SK-N-SH (cell line): ENCODE measurements at regions of chr4 and their contacts with region 1.

Region 1: GRCh38 chr4:82721819-82722423 is 76.7 kb downstream of the SCD5 start:
- DNase-seq: peak; percentile 64
- H3K4me3 ChIP-seq: no peak overlapping the region
- H3K27ac ChIP-seq: no peak overlapping the region
- H3K4me1 ChIP-seq: 0 out of 4 replicates have a peak, but pooled peaks cover 0 to 4% of the 10 kb centered on the region in 2 experiments
- H3K27me3 ChIP-seq: no peaks in the 10 kb centered on the region
- CTCF ChIP-seq: peak; percentile 69
- EP300 ChIP-seq: no peak
- RAD21 ChIP-seq: peak; percentile 87

Region 2: DNA sequence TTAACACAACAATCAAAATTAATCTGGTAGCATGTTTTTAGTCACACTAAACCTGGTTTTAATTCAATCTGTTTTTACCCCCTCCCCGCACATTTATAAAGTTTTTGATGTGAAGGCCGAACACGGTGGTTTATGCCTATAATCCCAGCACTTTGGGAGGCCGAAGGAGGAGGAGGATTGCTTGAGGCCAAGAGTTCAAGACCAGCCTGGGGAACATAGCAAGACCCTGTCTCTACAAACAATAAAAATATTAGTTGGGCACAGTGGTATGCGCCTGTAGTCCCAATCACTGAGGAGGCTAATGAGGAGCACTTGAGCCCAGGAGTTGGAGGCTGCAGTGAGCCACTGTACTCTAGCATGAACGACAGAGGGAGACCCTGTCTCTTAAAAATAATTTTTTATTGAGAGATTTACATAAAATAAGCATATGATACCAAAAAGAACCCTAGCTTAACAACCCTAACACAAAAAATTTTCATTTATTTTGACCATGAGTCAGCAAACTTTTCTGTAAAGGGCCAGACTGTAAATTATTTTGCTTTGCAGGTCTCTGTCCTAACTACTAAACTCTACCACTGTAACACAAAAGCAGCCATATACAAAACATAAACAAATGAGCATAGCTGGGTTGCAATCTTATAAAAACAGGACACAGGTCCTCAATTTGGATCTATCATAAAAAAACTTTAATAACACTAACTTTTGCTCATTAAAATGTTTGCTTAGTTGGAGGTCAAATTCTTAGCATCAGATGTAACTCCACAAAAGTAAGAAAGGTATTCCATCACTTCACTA is 369.6 kb before region 1 on chr4:
- CTCF ChIA-PET with region 1: no interaction called
- POLR2A ChIA-PET with region 1: no interaction called
- DNase-seq: no peak
- H3K4me3 ChIP-seq: no peak overlapping the region
- H3K27ac ChIP-seq: peak overlapping the region in 1 of 2 experiments; percentile 7; a peak in 1 of 4 replicates
- H3K4me1 ChIP-seq: peaks cover 0 to 4% of the 10 kb centered on the region in 2 experiments; a peak in 2 of 4 replicates
- H3K27me3 ChIP-seq: no peaks in the 10 kb centered on the region
- CTCF ChIP-seq: no peak
- EP300 ChIP-seq: no peak
- RAD21 ChIP-seq: no peak

Region 3: DNA sequence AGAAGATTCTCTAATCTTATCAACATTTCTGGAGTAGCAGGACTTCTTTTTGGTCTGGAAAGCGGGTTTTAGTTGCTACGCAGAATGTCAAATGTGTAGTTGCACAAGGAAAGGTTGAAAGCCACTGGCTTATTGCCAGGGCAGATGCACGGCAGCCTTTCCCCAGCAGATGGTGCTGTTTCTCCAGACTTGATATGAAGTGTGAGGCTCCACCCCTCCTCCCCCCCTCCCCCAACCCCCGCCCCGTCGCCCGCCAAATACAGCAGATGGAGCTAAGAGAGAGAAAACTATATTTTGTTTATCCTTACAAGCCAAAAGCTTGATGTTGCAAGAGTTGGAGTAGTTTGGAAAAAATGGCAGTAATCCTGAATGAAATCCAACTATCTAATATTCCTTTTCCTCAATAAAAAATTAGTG is 259.5 kb before region 1 on chr4:
- CTCF ChIA-PET with region 1: interaction called, 20 read pairs
- POLR2A ChIA-PET with region 1: interaction called, 3 read pairs
- DNase-seq: peak; percentile 89
- H3K4me3 ChIP-seq: no peak overlapping the region
- H3K27ac ChIP-seq: no peak overlapping the region
- H3K4me1 ChIP-seq: no peaks in the 10 kb centered on the region; a peak in 1 of 4 replicates
- H3K27me3 ChIP-seq: no peaks in the 10 kb centered on the region
- CTCF ChIP-seq: peak; percentile 67
- EP300 ChIP-seq: no peak
- RAD21 ChIP-seq: peak; percentile 80

Region 4: DNA sequence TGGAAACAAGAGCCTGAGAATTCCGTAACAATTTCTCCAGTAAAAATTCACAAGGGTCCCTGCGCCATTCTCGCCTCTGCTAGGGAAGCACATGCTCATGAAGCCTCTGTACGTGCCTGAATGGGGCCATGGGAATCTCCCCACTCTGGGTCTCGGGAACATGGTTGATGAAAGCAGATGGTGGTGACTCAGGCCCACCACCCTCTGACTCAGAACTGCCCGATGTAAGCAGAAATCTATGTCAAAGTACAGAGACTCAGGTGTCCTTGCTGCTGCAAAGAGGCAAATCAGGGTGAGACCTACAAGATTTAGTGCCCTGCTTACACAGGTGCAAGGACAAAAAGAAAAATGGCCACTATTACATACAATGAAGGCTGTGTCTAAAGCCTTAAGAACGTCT is 11.7 kb after region 1 on chr4:
- CTCF ChIA-PET with region 1: interaction called, 42 read pairs
- POLR2A ChIA-PET with region 1: no interaction called
- DNase-seq: no peak
- H3K4me3 ChIP-seq: no peak overlapping the region
- H3K27ac ChIP-seq: no peak overlapping the region
- H3K4me1 ChIP-seq: peaks cover 10 to 11% of the 10 kb centered on the region in 2 experiments; a peak in 2 of 4 replicates
- H3K27me3 ChIP-seq: no peaks in the 10 kb centered on the region
- CTCF ChIP-seq: no peak
- EP300 ChIP-seq: no peak
- RAD21 ChIP-seq: no peak

Region 5: GRCh38 chr4:82785611-82786400 is 63.9 kb after region 1 on chr4:
- CTCF ChIA-PET with region 1: interaction called, 13 read pairs
- POLR2A ChIA-PET with region 1: no interaction called
- DNase-seq: no peak
- H3K4me3 ChIP-seq: peak overlapping the region; percentile 38 to 48; a peak in 3 of 4 replicates
- H3K27ac ChIP-seq: peak overlapping the region; percentile 85 to 97
- H3K4me1 ChIP-seq: peaks cover 22 to 28% of the 10 kb centered on the region in 2 experiments
- H3K27me3 ChIP-seq: no peaks in the 10 kb centered on the region
- CTCF ChIP-seq: no peak
- EP300 ChIP-seq: peak in 1 of 2 experiments; percentile 83; a peak in 2 of 4 replicates
- RAD21 ChIP-seq: no peak

Region 6: GRCh38 chr4:82811838-82812341 is 90.0 kb after region 1 on chr4:
- CTCF ChIA-PET with region 1: interaction called, 12 read pairs
- POLR2A ChIA-PET with region 1: interaction called, 3 read pairs
- DNase-seq: no peak
- H3K4me3 ChIP-seq: no peak overlapping the region
- H3K27ac ChIP-seq: peak overlapping the region in 1 of 2 experiments; percentile 31; a peak in 2 of 4 replicates
- H3K4me1 ChIP-seq: peaks cover 0 to 6% of the 10 kb centered on the region in 2 experiments; a peak in 1 of 4 replicates
- H3K27me3 ChIP-seq: no peaks in the 10 kb centered on the region
- CTCF ChIP-seq: no peak
- EP300 ChIP-seq: no peak
- RAD21 ChIP-seq: no peak